Activated CD4-positive, alpha-beta T cell treated with anti-CD3 and anti-CD28 coated beads for 36 hours (primary cell): ENCODE measurements at regions of chr11 and their contacts with region 1.

Region 1: DNA sequence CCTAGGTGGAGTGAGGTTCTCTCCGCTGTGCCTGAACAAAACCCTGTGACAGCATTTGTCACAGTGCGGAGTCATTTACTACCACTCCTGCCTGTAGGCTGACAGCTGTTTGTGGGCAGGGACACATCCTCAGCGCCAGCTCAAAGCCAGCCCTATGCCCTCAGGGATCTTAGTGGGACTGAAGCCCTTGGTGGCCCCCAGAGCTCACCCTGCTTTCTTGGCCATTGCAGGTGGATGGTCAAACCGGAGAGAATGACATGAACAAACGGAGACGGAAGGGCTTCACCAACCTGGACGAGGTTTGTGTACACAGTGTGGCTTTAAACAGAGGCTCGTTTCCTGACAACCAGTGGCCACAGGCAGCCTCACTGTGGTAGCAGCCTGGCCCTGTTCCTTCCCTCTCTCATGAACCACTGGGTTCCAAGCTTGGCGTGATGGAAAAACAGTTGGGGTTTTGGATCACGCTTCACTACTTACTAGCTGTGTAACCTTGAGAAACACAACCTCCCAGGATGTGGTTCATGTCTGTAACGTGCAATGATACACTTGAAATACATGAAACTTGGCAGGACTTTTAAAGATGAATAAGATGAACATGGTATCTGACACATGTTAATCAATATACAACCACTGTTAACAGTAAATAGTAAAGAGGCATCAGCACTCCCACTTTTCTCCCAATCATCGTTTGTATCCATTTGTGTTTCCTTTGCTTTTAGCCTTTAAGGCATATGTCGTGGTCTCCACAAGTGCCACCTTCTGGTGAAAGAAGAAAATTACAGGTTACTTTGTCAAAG is 125.8 kb downstream of the MICAL2 start:
- DNase-seq: peak; percentile 78
- ATAC-seq: peak; percentile 86
- H3K4me3 Mint-ChIP-seq: peak overlapping the region; percentile 53
- H3K27ac Mint-ChIP-seq: peak overlapping the region; percentile 93
- H3K4me1 Mint-ChIP-seq: peaks cover 38% of the 10 kb centered on the region
- H3K27me3 Mint-ChIP-seq: no peaks in the 10 kb centered on the region

Region 2: DNA sequence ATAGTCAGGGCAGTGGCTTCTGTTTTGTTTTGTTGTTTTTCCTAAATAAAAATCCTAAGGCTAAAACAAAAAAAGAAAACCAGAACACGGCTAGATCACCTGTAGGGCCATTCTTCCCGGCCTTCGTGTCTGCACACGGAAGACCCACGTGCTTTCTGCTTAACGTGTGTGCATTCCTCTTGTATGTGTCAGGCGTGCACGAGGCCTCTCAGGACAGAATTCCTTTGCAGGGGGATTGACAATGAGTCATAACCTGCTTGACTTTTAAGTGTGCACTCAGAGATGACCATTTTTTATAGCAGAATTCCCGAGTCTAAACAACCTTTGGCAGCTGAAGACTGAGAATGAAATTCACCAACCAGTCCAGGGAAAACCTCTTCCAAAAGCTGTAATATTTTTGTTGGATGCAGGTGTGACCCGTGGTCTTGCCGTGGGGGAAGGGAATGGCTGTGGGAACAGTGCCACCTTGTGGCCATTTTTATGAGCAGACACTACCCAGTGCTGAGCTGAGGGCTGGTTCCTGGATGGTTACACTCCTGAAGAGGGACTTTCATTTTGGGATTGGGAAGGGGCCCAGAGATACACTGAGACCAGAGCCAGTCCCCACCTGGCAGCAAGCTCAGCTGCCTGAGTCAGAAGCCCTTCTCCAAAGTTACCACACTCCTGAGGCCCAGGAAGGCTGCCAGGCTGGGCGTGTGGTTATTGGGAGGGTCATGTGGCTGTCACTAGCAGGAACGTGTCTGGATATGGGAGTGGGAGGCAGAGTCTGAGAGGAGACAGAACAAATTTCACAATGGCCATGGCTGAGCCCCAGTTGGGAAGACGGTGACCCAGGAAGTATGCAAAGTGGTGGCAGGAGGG is 192.0 kb before region 1 on chr11:
- CTCF ChIA-PET with region 1: interaction called, 19 read pairs
- POLR2A ChIA-PET with region 1: no interaction called
- intact Hi-C with region 1: loop called (anchors 1 kb)
- DNase-seq: peak; percentile 80
- ATAC-seq: peak; percentile 73
- H3K4me3 Mint-ChIP-seq: no peak overlapping the region
- H3K27ac Mint-ChIP-seq: no peak overlapping the region
- H3K4me1 Mint-ChIP-seq: peaks cover 11% of the 10 kb centered on the region
- H3K27me3 Mint-ChIP-seq: peaks cover 4% of the 10 kb centered on the region

Region 3: GRCh38 chr11:12087075-12088004 is 148.8 kb before region 1 on chr11:
- CTCF ChIA-PET with region 1: interaction called, 19 read pairs
- POLR2A ChIA-PET with region 1: no interaction called
- intact Hi-C with region 1: no loop called
- DNase-seq: peak; percentile 62
- ATAC-seq: peak; percentile 86
- H3K4me3 Mint-ChIP-seq: no peak overlapping the region
- H3K27ac Mint-ChIP-seq: peak overlapping the region; percentile 56
- H3K4me1 Mint-ChIP-seq: peaks cover 59% of the 10 kb centered on the region
- H3K27me3 Mint-ChIP-seq: no peaks in the 10 kb centered on the region

Region 4: GRCh38 chr11:12149672-12150225 is 86.4 kb before region 1 on chr11:
- CTCF ChIA-PET with region 1: interaction called, 4 read pairs
- POLR2A ChIA-PET with region 1: interaction called, 30 read pairs
- intact Hi-C with region 1: loop called in 1 of 2 experiments (anchors 1 kb)
- DNase-seq: peak; percentile 81
- ATAC-seq: peak; percentile 52
- H3K4me3 Mint-ChIP-seq: peak overlapping the region; percentile 54
- H3K27ac Mint-ChIP-seq: peak overlapping the region; percentile 95
- H3K4me1 Mint-ChIP-seq: peaks cover 63% of the 10 kb centered on the region
- H3K27me3 Mint-ChIP-seq: no peaks in the 10 kb centered on the region

Region 5: DNA sequence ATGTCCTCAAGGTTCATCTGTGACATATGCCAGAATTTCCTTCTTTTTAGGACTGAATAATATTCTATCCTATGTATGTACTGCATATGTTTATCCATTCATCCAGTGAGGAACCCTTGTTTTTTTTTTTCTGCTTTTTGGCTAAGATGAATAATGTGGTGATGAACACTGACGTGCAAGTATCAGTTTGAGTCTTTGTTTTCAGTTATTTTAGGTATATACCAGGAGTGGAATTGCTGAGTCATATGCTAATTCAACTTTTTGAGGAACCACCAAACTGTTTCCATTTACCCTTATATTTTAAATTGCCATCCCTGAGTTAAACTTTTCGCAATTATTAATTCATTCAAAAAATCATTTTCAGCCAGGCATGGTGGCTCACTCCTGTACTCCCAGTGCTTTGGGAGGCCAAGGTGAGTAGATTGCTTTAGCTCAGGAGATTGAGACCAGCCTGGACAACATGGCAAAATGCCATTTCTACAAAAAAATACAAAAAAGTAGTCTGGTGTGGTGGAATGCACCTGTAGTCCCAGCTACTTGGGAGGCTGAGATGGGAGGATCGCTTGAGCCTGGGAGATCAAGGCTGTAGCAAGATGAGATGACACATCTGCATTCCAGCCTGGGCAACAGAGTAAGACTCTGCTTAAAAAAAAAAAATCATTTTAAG is 61.5 kb before region 1 on chr11:
- CTCF ChIA-PET with region 1: interaction called, 5 read pairs
- POLR2A ChIA-PET with region 1: no interaction called
- intact Hi-C with region 1: loop called (anchors 1 kb)
- DNase-seq: no peak
- ATAC-seq: peak; percentile 59
- H3K4me3 Mint-ChIP-seq: peak overlapping the region; percentile 47
- H3K27ac Mint-ChIP-seq: peak overlapping the region; percentile 94
- H3K4me1 Mint-ChIP-seq: peaks cover 69% of the 10 kb centered on the region
- H3K27me3 Mint-ChIP-seq: no peaks in the 10 kb centered on the region

Region 6: GRCh38 chr11:12200279-12201010 is 35.7 kb before region 1 on chr11:
- CTCF ChIA-PET with region 1: interaction called, 13 read pairs
- POLR2A ChIA-PET with region 1: interaction called, 3 read pairs
- intact Hi-C with region 1: loop called in 1 of 2 experiments (anchors 5 kb)
- DNase-seq: peak; percentile 72
- ATAC-seq: no peak
- H3K4me3 Mint-ChIP-seq: peak overlapping the region; percentile 82
- H3K27ac Mint-ChIP-seq: peak overlapping the region; percentile 71
- H3K4me1 Mint-ChIP-seq: peaks cover 90% of the 10 kb centered on the region
- H3K27me3 Mint-ChIP-seq: no peaks in the 10 kb centered on the region

Region 7: DNA sequence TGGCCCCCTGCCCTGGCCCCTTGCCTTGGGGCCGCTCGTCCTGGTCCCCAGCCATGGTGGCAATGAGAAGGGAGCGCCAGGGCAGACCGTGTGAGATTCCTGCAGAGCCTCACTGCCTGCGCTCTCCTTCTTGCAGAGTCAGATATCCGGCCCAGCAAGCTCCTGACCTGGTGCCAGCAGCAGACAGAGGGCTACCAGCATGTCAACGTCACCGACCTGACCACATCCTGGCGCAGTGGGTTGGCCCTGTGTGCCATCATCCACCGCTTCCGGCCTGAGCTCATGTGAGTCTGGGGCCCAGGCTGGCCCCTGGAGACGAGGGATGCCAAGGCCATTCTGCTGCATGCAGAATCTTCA is 11.6 kb before region 1 on chr11:
- CTCF ChIA-PET with region 1: interaction called, 39 read pairs
- POLR2A ChIA-PET with region 1: interaction called, 7 read pairs
- intact Hi-C with region 1: loop called in 1 of 2 experiments (anchors 1 kb)
- DNase-seq: peak; percentile 96
- ATAC-seq: peak; percentile 97
- H3K4me3 Mint-ChIP-seq: peak overlapping the region; percentile 74
- H3K27ac Mint-ChIP-seq: peak overlapping the region; percentile 93
- H3K4me1 Mint-ChIP-seq: peaks cover 48% of the 10 kb centered on the region
- H3K27me3 Mint-ChIP-seq: no peaks in the 10 kb centered on the region

Region 8: GRCh38 chr11:12331239-12331874 is 95.2 kb after region 1 on chr11:
- CTCF ChIA-PET with region 1: no interaction called
- POLR2A ChIA-PET with region 1: no interaction called
- intact Hi-C with region 1: no loop called
- DNase-seq: peak; percentile 85
- ATAC-seq: peak; percentile 36
- H3K4me3 Mint-ChIP-seq: no peak overlapping the region
- H3K27ac Mint-ChIP-seq: no peak overlapping the region
- H3K4me1 Mint-ChIP-seq: peaks cover 3% of the 10 kb centered on the region
- H3K27me3 Mint-ChIP-seq: no peaks in the 10 kb centered on the region

Region 9: GRCh38 chr11:12356944-12357650 is 121.0 kb after region 1 on chr11:
- CTCF ChIA-PET with region 1: no interaction called
- POLR2A ChIA-PET with region 1: no interaction called
- intact Hi-C with region 1: no loop called
- DNase-seq: no peak
- ATAC-seq: no peak
- H3K4me3 Mint-ChIP-seq: no peak overlapping the region
- H3K27ac Mint-ChIP-seq: no peak overlapping the region
- H3K4me1 Mint-ChIP-seq: peaks cover 43% of the 10 kb centered on the region
- H3K27me3 Mint-ChIP-seq: no peaks in the 10 kb centered on the region

Region 10: GRCh38 chr11:12377824-12378593 is 141.9 kb after region 1 on chr11:
- CTCF ChIA-PET with region 1: no interaction called
- POLR2A ChIA-PET with region 1: no interaction called
- intact Hi-C with region 1: no loop called
- DNase-seq: peak; percentile 14
- ATAC-seq: peak; percentile 55
- H3K4me3 Mint-ChIP-seq: peak overlapping the region; percentile 62
- H3K27ac Mint-ChIP-seq: peak overlapping the region; percentile 44
- H3K4me1 Mint-ChIP-seq: peaks cover 8% of the 10 kb centered on the region
- H3K27me3 Mint-ChIP-seq: peaks cover 26% of the 10 kb centered on the region